ENCODE measurements at regions of chr6 and their contacts with region 1.

Region 1: DNA sequence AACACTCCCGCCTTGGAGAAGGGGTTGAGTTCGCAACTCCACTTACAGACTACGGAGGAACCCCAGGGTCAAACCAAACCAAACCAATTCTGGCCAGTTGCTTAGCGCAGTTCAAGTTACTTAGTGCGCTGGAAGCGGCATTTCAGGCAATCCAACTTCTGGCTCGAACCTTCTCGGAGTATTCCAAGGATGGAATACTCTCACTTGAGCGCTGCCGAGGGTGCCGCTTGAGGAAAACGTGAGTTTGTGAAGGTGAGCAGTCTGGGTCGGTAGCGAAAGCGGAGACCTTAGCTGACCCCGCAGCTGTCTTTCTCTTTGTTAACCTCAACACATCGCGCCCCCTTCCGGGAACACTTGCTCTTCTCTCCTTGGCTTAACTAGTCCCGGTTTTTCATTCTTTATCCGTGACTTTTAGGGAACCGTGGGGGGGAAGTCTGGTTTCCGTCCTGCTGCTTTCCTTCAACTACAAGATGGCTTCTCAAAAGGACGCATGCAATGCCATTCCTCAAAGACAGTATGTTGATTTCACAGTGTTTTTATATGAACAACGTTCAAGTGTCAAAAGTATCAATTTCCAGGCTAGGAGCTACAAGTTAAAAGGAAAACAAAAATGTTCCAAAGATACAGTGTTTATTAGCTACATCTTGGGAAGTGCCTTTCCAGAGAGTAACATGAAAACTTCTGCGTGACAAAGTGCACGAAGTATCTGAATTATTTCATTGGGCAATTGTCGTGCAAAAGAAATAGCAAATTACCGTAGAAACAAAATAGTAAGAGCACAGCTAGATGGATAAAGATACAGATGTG is 742 bp upstream of the PNISR start:
- DNase-seq: peak; percentile 30
- H3K4me3 ChIP-seq: peak overlapping the region; percentile 50 to 93 (median 88)
- H3K27ac ChIP-seq: peak overlapping the region; percentile 88 to 100 (median 98)
- H3K4me1 ChIP-seq: peaks cover 19 to 61% (median 36%) of the 10 kb centered on the region in 3 donors
- H3K27me3 ChIP-seq: no peaks in the 10 kb centered on the region
- CTCF ChIP-seq: peak in 4 of 6 experiments; percentile 23 to 36 (median 30)
- POLR2A ChIP-seq: peak in 1 of 4 donors; percentile 1

Region 2: DNA sequence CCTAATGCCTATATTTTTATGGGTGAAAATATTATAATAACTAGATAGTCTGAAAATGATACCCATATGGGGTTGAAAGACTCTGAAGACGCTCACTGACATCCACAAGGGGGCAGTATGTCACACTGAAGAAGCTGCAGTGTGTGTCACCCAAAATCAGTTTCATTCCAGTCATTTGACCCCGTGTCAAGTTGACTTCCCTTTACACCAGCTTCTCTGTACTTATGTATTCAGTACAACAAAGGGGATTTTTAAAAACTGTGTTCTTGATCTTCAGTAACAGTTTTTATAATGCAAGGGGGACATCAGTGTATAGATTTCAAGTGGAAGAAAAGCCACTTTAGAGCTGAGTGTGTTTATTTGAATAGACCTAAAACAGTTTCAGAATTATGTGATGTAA is 95.7 kb before region 1 on chr6:
- intact Hi-C with region 1: loop called (anchors 10 kb)
- DNase-seq: no peak
- H3K4me3 ChIP-seq: no peak overlapping the region
- H3K27ac ChIP-seq: no peak overlapping the region
- H3K4me1 ChIP-seq: peaks cover 0 to 6% (median 3%) of the 10 kb centered on the region in 3 donors
- H3K27me3 ChIP-seq: no peaks in the 10 kb centered on the region
- CTCF ChIP-seq: peak; percentile 46 to 72 (median 62)
- POLR2A ChIP-seq: no peak